Activated T-helper 1 cell treated with anti-CD3 and anti-CD28 coated beads, Interleukin-12 subunit alpha, Interleukin-12 subunit beta, Interleukin-2, Interleukin-4 antibody, amounts not matched to agents 30 ng/mL and 10 ng/mL and 1 ng/mL, durations not matched to agents 14 hours and 24 hours and 36 hours (primary cell): ENCODE measurements at regions of chrX and their contacts with region 1.

Region 1: GRCh38 chrX:24054182-24055042 is at the start of gene EIF2S3:
- DNase-seq: peak; percentile 81
- H3K4me3 Mint-ChIP-seq: no peak within 1 kb of the TSS
- H3K27ac Mint-ChIP-seq: peak within 1 kb of the TSS; percentile 98
- H3K4me1 Mint-ChIP-seq: no peaks in the 10 kb centered on the region
- H3K27me3 Mint-ChIP-seq: no peaks in the 10 kb centered on the region
- total RNA-seq, gene EIF2S3: 191 and 194 TPM in 2 replicates

Region 2: DNA sequence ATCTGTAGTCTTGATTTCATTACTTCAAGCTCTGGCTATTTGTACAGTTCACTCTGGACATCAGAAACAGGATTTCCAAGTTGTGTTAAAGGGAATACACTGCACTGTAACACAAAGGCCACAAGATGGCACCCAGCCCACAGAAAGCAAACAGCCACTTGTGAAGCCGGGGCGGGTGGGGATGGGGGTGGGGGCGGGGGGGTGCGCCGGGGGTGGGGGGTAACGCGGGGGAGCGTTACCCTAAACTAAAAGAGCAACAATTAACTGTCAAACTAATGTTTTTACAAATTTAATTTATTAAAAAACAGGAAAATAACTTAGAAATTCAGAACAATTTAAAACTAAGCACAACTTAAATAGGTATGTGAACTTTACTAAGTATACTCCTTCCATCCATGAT is 359.8 kb before region 1 on chrX:
- intact Hi-C with region 1: loop called (anchors 1 kb)
- DNase-seq: peak; percentile 4
- H3K4me3 Mint-ChIP-seq: no peak overlapping the region
- H3K27ac Mint-ChIP-seq: no peak overlapping the region
- H3K4me1 Mint-ChIP-seq: no peaks in the 10 kb centered on the region
- H3K27me3 Mint-ChIP-seq: no peaks in the 10 kb centered on the region

Region 3: DNA sequence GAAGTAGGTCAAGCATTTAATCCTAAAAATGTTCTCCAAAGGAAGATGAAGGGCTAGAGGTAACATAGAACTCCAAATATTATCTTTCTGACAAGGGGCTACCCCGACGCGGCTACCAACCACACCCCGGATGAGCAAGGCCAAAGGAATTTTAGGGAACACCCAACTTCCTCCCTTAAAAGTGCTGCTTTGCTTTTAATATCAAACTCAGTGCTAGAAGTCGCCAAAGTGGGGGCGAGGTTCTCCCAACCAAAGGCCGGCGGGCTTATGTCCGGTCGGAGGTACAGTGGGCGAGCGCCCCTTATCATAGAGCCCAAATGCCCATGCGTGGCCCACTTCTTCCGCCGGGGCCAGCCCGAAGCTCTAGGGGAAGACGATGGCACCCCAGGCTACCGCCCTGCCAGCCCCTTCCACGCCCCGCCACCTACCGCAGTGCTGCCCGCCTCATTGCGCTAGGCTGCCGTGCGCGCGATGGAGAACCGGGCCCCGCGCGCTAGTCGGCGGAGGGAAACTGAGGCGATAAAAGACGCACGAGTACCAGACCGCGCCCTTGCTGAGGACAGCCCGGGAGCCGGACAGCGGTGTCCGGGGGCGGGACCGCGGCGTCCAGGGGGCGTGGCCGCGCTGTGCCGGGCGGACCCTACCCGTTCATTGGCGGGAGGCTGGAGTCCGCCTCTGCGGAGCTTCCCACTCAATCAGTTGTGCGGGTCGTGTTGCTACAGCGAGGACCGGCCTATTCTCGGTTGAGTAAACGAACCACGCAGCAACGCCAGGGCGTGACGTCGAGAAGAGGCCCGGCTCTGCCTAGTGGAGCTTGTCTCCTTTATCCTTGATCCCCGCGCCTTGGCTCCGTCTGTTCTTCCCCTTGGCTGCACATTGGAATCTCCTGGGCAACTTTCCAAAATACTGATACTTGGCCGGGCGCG is 311.5 kb before region 1 on chrX and contains the start of gene ACOT9:
- intact Hi-C with region 1: loop called (anchors 2 kb)
- DNase-seq: peak; percentile 77
- H3K4me3 Mint-ChIP-seq: peak within 1 kb of the TSS; percentile 93
- H3K27ac Mint-ChIP-seq: peak within 1 kb of the TSS; percentile 92
- H3K4me1 Mint-ChIP-seq: peaks cover 29% of the 10 kb centered on the region
- H3K27me3 Mint-ChIP-seq: no peaks in the 10 kb centered on the region
- total RNA-seq, gene ACOT9: 58.3 and 60.3 TPM in 2 replicates

Region 4: DNA sequence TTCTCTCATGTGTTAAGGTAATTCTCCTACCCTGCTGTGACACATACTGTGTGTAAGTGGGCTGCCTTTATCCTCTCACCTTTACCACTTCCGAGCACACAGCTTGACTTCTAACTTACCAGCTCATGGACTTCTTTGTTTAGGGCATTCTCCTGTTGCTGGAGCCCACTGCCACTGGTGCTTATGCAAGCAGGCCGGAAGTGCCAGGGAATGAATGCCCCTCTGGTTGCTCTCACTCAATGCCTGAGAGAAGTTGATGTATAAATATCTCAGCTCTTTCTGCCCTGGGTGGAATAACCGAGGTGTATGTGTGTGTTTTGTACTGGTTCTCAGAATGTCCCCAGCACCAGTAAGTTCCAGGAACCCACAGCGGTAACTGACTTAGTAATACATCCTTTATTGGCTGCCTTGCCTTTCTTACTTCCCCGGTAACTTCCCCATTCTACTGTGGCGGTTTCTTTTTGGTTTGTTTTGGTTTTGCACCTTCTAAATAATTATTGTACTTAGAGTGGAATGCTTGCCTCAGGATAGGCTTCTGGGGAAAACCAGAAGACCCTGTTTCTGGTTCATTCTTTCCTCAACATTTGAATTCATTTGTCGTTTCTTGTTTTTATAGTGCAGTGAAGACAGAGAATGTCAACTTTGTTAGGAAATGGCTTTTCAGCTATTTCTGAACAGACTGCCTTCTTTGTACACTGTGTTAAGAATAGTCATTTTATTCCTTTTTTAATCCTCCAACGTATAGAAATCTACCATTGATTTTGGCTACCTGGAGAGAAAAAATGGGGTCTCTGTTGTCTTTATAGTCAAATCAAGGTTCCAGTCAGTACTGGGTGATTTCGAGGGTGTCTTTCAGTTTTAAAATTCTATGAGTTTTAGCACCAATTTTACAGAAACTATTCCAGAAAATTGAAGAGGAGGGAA is 101.2 kb before region 1 on chrX:
- intact Hi-C with region 1: loop called (anchors 1 kb)
- DNase-seq: peak; percentile 45
- H3K4me3 Mint-ChIP-seq: peak overlapping the region; percentile 82
- H3K27ac Mint-ChIP-seq: peak overlapping the region; percentile 95
- H3K4me1 Mint-ChIP-seq: peaks cover 28% of the 10 kb centered on the region
- H3K27me3 Mint-ChIP-seq: no peaks in the 10 kb centered on the region

Region 5: GRCh38 chrX:24024819-24025740 is 29.3 kb before region 1 on chrX:
- intact Hi-C with region 1: loop called (anchors 1 kb)
- DNase-seq: peak; percentile 72
- H3K4me3 Mint-ChIP-seq: peak overlapping the region; percentile 92
- H3K27ac Mint-ChIP-seq: peak overlapping the region; percentile 88
- H3K4me1 Mint-ChIP-seq: peaks cover 25% of the 10 kb centered on the region
- H3K27me3 Mint-ChIP-seq: no peaks in the 10 kb centered on the region

Region 6: GRCh38 chrX:24097741-24098260 is 43.4 kb after region 1 on chrX:
- intact Hi-C with region 1: no loop called
- DNase-seq: no peak
- H3K4me3 Mint-ChIP-seq: no peak overlapping the region
- H3K27ac Mint-ChIP-seq: no peak overlapping the region
- H3K4me1 Mint-ChIP-seq: peaks cover 6% of the 10 kb centered on the region
- H3K27me3 Mint-ChIP-seq: no peaks in the 10 kb centered on the region

Region 7: DNA sequence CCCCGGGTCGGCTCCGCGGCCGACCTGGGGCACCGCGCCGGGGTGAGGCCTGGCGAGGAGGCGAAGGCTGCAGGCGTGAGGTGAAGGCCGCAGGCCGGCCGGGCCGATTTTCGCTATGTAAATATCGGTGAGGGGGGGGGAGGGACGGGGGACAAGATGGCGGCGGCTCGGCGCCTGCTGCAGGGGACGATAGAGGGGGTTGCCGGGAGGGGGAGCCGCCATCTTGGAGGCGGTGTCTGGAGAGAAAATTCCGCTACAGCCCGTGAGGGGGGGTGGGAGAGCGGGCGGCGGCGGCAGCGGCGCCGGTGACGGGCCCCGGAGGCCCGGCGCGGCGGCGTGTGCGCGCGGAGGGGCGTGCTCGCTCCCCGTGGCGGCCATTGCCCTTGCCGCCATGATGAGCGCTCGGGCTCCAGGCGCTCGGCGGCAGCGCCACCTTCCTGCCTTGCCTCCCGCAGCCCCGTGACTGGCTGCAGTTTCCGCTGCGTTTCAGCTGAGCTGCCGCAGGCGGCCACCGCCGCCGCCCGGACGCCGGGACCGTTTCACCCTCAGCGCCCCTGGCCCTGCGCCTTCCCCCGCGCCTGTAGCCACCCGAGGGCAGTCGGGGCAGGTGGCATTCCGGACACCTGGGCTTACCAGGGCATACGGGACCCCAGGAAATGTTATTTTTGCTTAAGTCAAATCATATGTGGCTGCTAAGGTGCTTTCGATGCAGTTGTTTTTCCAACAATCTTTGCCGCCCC is 95.8 kb after region 1 on chrX:
- intact Hi-C with region 1: loop called (anchors 1 kb)
- DNase-seq: peak; percentile 76
- H3K4me3 Mint-ChIP-seq: peak overlapping the region; percentile 95
- H3K27ac Mint-ChIP-seq: peak overlapping the region; percentile 92
- H3K4me1 Mint-ChIP-seq: peaks cover 64% of the 10 kb centered on the region
- H3K27me3 Mint-ChIP-seq: no peaks in the 10 kb centered on the region

Region 8: DNA sequence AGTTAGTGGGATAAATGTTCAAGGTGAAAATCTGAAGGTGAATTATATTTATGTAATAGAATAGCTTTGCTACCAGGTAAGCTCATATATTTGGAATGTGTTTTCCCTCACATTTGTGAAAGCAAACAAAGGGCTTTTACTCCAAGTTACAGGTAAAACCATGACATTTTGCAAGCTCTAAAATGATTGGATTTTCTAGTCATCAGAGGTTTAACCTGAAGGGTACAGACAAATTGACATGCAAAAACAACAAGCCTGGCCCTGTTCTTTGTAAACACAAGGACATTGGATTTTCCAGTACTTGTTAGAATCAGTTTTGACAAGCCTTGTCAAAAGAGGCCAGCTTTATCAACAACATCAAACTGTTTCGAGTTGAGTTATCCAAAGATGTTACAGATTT is 146.8 kb after region 1 on chrX:
- intact Hi-C with region 1: no loop called
- DNase-seq: no peak
- H3K4me3 Mint-ChIP-seq: no peak overlapping the region
- H3K27ac Mint-ChIP-seq: no peak overlapping the region
- H3K4me1 Mint-ChIP-seq: peaks cover 41% of the 10 kb centered on the region
- H3K27me3 Mint-ChIP-seq: no peaks in the 10 kb centered on the region

Region 9: GRCh38 chrX:24241822-24242648 is 187.6 kb after region 1 on chrX:
- intact Hi-C with region 1: no loop called
- DNase-seq: no peak
- H3K4me3 Mint-ChIP-seq: no peak overlapping the region
- H3K27ac Mint-ChIP-seq: no peak overlapping the region
- H3K4me1 Mint-ChIP-seq: peaks cover 8% of the 10 kb centered on the region
- H3K27me3 Mint-ChIP-seq: peaks cover 2% of the 10 kb centered on the region